AG04449 (cell line): ENCODE measurements at regions of chr12 and their contacts with region 1.

Region 1: GRCh38 chr12:52870351-52871290 is 21.8 kb upstream of the KRT78 start:
- DNase-seq: no peak
- H3K4me3 ChIP-seq: no peak overlapping the region
- CTCF ChIP-seq: peak; percentile 86

Region 2: GRCh38 chr12:52667511-52667910 is 203.1 kb before region 1 on chr12:
- CTCF ChIA-PET with region 1: interaction called, 10 read pairs
- POLR2A ChIA-PET with region 1: no interaction called
- DNase-seq: no peak
- H3K4me3 ChIP-seq: no peak overlapping the region
- CTCF ChIP-seq: peak; percentile 10

Region 3: GRCh38 chr12:52860063-52860823 is 10.4 kb before region 1 on chr12:
- CTCF ChIA-PET with region 1: interaction called, 12 read pairs
- POLR2A ChIA-PET with region 1: interaction called, 3 read pairs
- DNase-seq: peak; percentile 41
- H3K4me3 ChIP-seq: no peak overlapping the region
- CTCF ChIP-seq: no peak